SK-N-SH (cell line): ENCODE measurements at regions of chr9 and their contacts with region 1.

Region 1: GRCh38 chr9:75855509-75855908 is 35.0 kb upstream of the PCSK5 start:
- DNase-seq: no peak
- H3K4me3 ChIP-seq: no peak overlapping the region
- H3K27ac ChIP-seq: no peak overlapping the region
- H3K4me1 ChIP-seq: no peaks in the 10 kb centered on the region
- H3K27me3 ChIP-seq: no peaks in the 10 kb centered on the region
- CTCF ChIP-seq: peak; percentile 54
- EP300 ChIP-seq: no peak
- RAD21 ChIP-seq: peak; percentile 42

Region 2: GRCh38 chr9:75866273-75866871 is 10.9 kb after region 1 on chr9:
- CTCF ChIA-PET with region 1: interaction called, 10 read pairs
- POLR2A ChIA-PET with region 1: no interaction called
- DNase-seq: peak; percentile 15
- H3K4me3 ChIP-seq: peak overlapping the region in 1 of 2 experiments; percentile 48; a peak in 1 of 4 replicates
- H3K27ac ChIP-seq: no peak overlapping the region
- H3K4me1 ChIP-seq: no peaks in the 10 kb centered on the region
- H3K27me3 ChIP-seq: no peaks in the 10 kb centered on the region
- CTCF ChIP-seq: peak; percentile 80
- EP300 ChIP-seq: no peak
- RAD21 ChIP-seq: peak; percentile 55

Region 3: DNA sequence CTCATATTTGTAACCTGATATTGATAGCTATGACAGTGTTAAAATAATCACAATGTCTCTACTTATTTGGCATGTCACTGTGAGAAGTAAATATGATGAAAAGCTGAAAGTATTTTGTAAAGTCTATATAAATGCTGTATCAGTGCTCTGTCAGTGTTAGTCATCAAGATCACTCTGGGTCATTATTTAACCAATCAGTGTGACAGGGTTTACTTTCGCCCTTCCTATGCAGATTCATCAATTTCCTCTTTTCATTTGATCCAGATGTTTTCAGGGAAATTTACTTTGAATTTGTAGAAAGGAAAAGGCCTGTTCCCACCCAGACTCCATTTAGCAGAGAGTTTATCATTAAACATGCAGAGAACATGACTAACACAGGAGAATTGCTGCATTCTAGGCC is 25.1 kb after region 1 on chr9:
- CTCF ChIA-PET with region 1: no interaction called
- POLR2A ChIA-PET with region 1: no interaction called
- DNase-seq: no peak
- H3K4me3 ChIP-seq: no peak overlapping the region
- H3K27ac ChIP-seq: no peak overlapping the region
- H3K4me1 ChIP-seq: no peaks in the 10 kb centered on the region
- H3K27me3 ChIP-seq: 0 out of 2 replicates have a peak, but pooled peaks cover 7% of the 10 kb centered on the region
- CTCF ChIP-seq: no peak
- EP300 ChIP-seq: no peak
- RAD21 ChIP-seq: no peak

Region 4: GRCh38 chr9:76049341-76049740 is 193.8 kb after region 1 on chr9:
- CTCF ChIA-PET with region 1: no interaction called
- POLR2A ChIA-PET with region 1: no interaction called
- DNase-seq: no peak
- H3K4me3 ChIP-seq: no peak overlapping the region
- H3K27ac ChIP-seq: no peak overlapping the region
- H3K4me1 ChIP-seq: no peaks in the 10 kb centered on the region
- H3K27me3 ChIP-seq: no peaks in the 10 kb centered on the region
- CTCF ChIP-seq: no peak
- EP300 ChIP-seq: no peak
- RAD21 ChIP-seq: no peak